G401 (cell line): ENCODE measurements at regions of chr12 and their contacts with region 1.

Region 1: DNA sequence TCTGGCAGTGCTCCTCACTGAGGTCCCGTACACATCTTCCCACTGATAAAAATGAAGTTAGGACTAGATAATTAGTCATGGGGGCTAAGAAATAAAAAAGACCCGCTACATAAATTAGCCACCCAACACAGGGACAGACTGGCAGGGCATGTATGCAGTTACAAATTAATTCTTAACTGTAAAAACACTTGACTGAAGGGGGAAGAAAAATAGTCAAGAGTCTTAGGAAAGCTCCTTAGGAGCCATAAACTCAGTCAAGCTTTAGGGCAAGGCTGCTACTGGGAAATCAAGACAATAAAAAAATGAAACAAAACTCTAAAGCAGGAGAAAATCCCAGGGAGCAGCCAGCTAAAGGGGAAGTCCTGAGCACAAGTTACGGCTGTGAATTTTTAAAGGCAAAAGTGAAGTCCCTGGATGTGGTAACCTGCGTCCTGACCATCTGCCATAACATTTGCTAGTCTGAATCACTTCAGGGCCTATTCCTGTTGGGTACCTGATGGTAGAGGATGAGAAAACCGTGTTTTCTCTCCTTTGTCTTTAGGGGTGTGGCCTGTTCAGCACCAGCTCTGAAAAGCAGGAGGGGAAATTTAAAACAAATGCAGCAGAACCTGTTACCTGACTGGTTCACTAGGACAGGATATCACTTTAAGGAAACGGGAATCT is 7.5 kb upstream of the NPFF start:
- DNase-seq: peak; percentile 98

Region 2: DNA sequence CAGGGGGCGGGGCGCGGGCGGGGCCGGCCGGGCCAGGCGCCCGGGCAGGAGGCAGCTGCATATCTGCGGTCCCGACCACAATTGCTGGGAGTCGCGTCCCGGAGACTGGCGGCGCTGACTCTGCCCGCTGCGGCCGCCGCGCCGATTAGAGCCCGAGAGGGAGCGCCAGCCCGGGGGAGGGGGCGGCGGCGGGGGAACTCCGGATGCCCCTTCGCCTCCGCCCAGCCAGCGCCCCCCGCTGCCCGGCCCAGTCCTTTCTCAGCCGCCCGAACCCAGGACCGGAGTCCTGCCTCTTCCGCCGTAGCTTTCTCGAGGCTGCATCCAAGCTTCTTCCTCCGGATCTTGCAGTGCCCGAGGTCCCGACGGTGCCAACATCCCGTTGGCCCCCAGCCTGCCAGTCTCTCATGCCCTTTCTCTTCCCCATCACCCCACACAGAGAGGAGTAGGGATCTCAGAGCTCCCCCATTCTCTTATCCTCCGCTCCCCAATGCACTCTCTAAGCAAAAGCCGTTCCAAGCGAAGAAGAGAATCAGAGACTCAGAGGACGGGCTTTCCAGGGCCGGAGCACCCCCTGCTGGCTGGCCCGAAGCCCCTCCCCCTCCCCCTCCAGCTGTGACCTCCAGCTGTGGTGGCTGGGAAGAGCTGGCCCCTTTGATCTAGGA is 169.8 kb before region 1 on chr12:
- in situ Hi-C with region 1: loop called (anchors 5 kb)
- DNase-seq: peak; percentile 44